CD4-positive, alpha-beta T cell (primary cell): ENCODE measurements at regions of chr1 and their contacts with region 1.

Region 1: DNA sequence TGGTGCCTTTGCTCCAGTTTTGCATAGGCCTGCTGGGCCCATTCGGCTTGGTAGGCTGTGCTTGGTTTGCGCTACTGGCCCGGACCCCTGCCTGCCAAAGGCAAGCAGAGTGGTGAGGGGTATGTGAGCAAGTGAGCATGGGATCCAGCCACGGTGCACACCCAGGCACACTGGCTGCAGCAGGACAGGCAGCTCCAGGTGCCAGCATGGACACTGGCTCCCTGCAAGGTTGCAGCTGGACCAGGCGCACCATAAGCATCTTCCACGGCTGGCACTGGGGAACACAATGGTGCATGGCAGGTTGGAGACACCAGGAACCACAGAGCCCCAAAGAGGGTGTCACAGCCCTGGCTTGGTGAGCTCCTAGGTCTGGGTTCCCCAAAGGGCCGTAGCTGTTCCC is 693.5 kb upstream of the PTBP2 start:
- DNase-seq: peak in 1 of 14 experiments; percentile 4
- ATAC-seq: no peak
- H3K4me3 ChIP-seq: no peak overlapping the region
- H3K4me3 Mint-ChIP-seq: no peak overlapping the region
- H3K27ac ChIP-seq: no peak overlapping the region
- H3K27ac Mint-ChIP-seq: no peak overlapping the region
- H3K4me1 ChIP-seq: no peaks in the 10 kb centered on the region
- H3K4me1 Mint-ChIP-seq: no peaks in the 10 kb centered on the region
- H3K27me3 ChIP-seq: no peaks in the 10 kb centered on the region
- H3K27me3 Mint-ChIP-seq: no peaks in the 10 kb centered on the region
- CTCF ChIP-seq: no peak

Region 2: GRCh38 chr1:95935719-95936118 is 92.4 kb before region 1 on chr1:
- CTCF ChIA-PET with region 1: no interaction called
- POLR2A ChIA-PET with region 1: no interaction called
- intact Hi-C with region 1: no loop called
- DNase-seq: no peak
- ATAC-seq: no peak
- H3K4me3 ChIP-seq: no peak overlapping the region
- H3K4me3 Mint-ChIP-seq: no peak overlapping the region
- H3K27ac ChIP-seq: no peak overlapping the region
- H3K27ac Mint-ChIP-seq: no peak overlapping the region
- H3K4me1 ChIP-seq: no peaks in the 10 kb centered on the region
- H3K4me1 Mint-ChIP-seq: no peaks in the 10 kb centered on the region
- H3K27me3 ChIP-seq: no peaks in the 10 kb centered on the region
- H3K27me3 Mint-ChIP-seq: no peaks in the 10 kb centered on the region
- CTCF ChIP-seq: no peak

Region 3: GRCh38 chr1:96016219-96016618 is 11.9 kb before region 1 on chr1:
- CTCF ChIA-PET with region 1: no interaction called
- POLR2A ChIA-PET with region 1: no interaction called
- intact Hi-C with region 1: loop called in 1 of 2 experiments (anchors 1 kb)
- DNase-seq: no peak
- ATAC-seq: no peak
- H3K4me3 ChIP-seq: no peak overlapping the region
- H3K4me3 Mint-ChIP-seq: no peak overlapping the region
- H3K27ac ChIP-seq: no peak overlapping the region
- H3K27ac Mint-ChIP-seq: no peak overlapping the region
- H3K4me1 ChIP-seq: no peaks in the 10 kb centered on the region
- H3K4me1 Mint-ChIP-seq: no peaks in the 10 kb centered on the region
- H3K27me3 ChIP-seq: no peaks in the 10 kb centered on the region
- H3K27me3 Mint-ChIP-seq: no peaks in the 10 kb centered on the region
- CTCF ChIP-seq: no peak